Activated T-helper 1 cell treated with anti-CD3 and anti-CD28 coated beads, Interleukin-12 subunit alpha, Interleukin-12 subunit beta, Interleukin-2, Interleukin-4 antibody, amounts not matched to agents 30 ng/mL and 10 ng/mL and 1 ng/mL, durations not matched to agents 14 hours and 24 hours and 36 hours (primary cell): ENCODE measurements at regions of chr17 and their contacts with region 1.

Region 1: DNA sequence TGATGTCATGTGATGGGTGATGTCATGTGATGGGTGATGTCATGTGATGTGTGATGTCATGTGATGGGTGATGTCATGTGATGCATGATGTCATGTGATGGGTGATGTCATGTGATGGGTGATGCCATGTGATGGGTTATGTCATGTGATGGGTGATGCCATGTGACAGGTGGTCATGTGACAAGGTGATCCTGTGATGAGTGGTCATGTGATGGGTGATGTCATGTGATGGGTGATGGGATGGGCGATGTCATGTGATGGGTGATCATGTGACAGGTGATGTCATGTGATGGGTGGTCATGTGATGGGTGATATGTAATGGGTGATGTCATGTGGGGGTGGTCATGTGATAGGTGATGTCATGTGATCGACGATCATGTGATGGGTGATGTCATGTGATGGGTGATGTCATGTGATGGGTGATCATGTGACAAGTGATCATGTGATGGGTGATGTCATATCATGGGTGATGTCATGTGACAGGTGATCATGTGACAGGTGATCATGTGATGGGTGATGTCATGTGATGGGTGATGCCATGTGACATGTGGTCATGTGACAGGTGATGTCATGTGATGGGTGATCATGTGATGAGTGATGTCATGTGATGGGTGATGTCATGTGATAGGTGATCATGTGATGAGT is 17.2 kb downstream of the CD300LB start:
- DNase-seq: peak; percentile 56
- H3K4me3 Mint-ChIP-seq: peak overlapping the region; percentile 40
- H3K27ac Mint-ChIP-seq: peak overlapping the region; percentile 99
- H3K4me1 Mint-ChIP-seq: peaks cover 29% of the 10 kb centered on the region
- H3K27me3 Mint-ChIP-seq: peaks cover 15% of the 10 kb centered on the region

Region 2: GRCh38 chr17:74203439-74204240 is 310.5 kb before region 1 on chr17 and contains the start of gene RPL38:
- intact Hi-C with region 1: loop called (anchors 5 kb)
- DNase-seq: peak; percentile 91
- H3K4me3 Mint-ChIP-seq: peak within 1 kb of the TSS; percentile 99
- H3K27ac Mint-ChIP-seq: peak within 1 kb of the TSS; percentile 99
- H3K4me1 Mint-ChIP-seq: peaks cover 35% of the 10 kb centered on the region
- H3K27me3 Mint-ChIP-seq: peaks cover 23% of the 10 kb centered on the region
- total RNA-seq, gene RPL38: 1,123 and 1,161 TPM in 2 replicates

Region 3: DNA sequence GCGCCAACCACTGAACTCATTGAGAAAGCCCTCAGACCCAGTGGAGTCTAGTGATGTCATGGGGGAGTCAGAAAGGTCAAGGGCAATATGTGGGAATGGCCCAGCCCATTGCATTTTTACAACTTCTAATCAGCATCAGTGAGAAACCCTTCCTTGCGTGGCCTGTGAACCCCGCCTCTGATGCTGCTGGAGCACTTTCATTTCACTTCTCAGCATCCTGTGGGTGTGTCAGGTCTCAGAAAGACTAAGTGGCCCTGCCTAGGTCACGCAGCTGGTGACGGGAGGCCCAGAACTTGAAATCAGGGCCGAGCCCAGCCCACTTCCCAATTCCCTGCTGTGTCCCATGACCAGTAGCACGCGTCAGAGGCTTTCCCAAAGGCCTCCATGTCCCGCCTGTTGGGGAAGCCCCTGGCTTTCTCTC is 234.0 kb before region 1 on chr17:
- intact Hi-C with region 1: loop called (anchors 5 kb)
- DNase-seq: peak; percentile 61
- H3K4me3 Mint-ChIP-seq: peak overlapping the region; percentile 4
- H3K27ac Mint-ChIP-seq: peak overlapping the region; percentile 66
- H3K4me1 Mint-ChIP-seq: peaks cover 34% of the 10 kb centered on the region
- H3K27me3 Mint-ChIP-seq: no peaks in the 10 kb centered on the region

Region 4: GRCh38 chr17:74478420-74479100 is 35.5 kb before region 1 on chr17:
- intact Hi-C with region 1: loop called (anchors 5 kb)
- DNase-seq: peak; percentile 57
- H3K4me3 Mint-ChIP-seq: peak overlapping the region; percentile 67
- H3K27ac Mint-ChIP-seq: peak overlapping the region; percentile 83
- H3K4me1 Mint-ChIP-seq: peaks cover 63% of the 10 kb centered on the region
- H3K27me3 Mint-ChIP-seq: no peaks in the 10 kb centered on the region

Region 5: DNA sequence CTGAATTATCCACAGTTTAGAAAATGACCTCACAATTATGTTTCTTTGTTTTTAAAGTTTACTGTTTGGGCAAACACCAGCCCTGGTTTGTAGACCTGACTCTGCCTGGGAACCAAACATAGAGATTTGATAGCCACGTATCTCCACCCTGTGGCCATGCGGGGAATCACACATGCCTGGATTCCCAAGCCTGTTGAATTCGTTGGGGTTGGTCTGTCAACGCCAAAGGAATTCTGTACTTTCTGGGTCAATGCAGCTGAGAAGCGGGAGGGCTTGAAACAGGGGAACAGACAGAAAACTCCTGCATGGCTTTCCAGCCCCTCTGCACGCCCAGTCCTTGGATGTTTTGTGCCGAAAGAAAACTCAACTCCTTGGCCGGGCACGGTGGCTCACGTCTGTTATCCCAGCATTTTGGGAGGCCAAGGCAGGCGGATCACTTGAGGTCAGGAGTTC is 20.7 kb before region 1 on chr17:
- intact Hi-C with region 1: no loop called
- DNase-seq: peak; percentile 48
- H3K4me3 Mint-ChIP-seq: no peak overlapping the region
- H3K27ac Mint-ChIP-seq: no peak overlapping the region
- H3K4me1 Mint-ChIP-seq: peaks cover 20% of the 10 kb centered on the region
- H3K27me3 Mint-ChIP-seq: peaks cover 12% of the 10 kb centered on the region

Region 6: DNA sequence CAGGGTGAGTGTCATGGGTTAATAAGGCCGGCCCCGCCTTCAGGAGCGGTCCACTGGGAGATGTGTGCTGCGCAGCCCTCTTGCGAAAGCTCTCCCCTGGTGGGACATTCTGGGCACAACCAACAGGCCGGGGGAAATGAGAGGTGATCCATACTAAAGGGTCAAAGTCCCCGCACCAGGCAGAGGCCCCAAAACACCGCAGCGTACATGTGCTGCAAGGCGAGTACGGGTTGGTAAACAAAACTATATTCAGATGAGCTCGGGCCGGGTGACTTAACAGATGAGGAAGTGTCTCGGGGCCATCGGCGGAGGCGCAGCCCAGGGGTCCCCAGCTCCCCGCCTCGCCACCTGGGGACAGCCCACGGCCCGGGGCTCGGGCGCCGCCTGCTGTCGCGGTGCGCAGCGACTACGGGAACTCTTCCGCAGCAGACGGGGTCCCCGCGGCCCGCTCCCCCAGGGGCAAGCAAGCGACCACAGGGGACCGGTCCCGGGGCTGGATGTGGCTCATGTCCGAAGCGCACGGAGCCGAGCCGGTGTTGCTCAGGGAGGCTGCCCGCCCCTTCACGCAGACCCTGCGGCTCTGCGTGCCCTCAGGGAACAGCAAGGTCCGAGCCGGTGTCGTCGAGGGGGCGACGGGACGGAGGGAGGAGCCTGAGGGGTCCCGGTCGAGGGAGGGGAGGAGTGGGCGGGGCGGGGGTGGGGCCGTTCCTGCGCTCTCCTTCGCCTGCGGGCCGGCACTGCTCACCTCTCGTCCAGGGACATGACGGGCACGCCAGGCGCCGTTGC is 222.6 kb after region 1 on chr17 and contains the start of gene RAB37:
- intact Hi-C with region 1: loop called (anchors 10 kb)
- DNase-seq: peak; percentile 46
- H3K4me3 Mint-ChIP-seq: peak within 1 kb of the TSS; percentile 89
- H3K27ac Mint-ChIP-seq: peak within 1 kb of the TSS; percentile 84
- H3K4me1 Mint-ChIP-seq: peaks cover 50% of the 10 kb centered on the region
- H3K27me3 Mint-ChIP-seq: peaks cover 4% of the 10 kb centered on the region
- total RNA-seq, gene RAB37: 6.0 and 6.1 TPM in 2 replicates

Region 7: GRCh38 chr17:74776044-74776977 is 262.2 kb after region 1 on chr17 and contains the start of gene NAT9:
- intact Hi-C with region 1: loop called (anchors 5 kb)
- DNase-seq: peak; percentile 99
- H3K4me3 Mint-ChIP-seq: peak within 1 kb of the TSS; percentile 99
- H3K27ac Mint-ChIP-seq: peak within 1 kb of the TSS; percentile 91
- H3K4me1 Mint-ChIP-seq: peaks cover 70% of the 10 kb centered on the region
- H3K27me3 Mint-ChIP-seq: no peaks in the 10 kb centered on the region
- total RNA-seq, gene NAT9: 69.0 and 70.8 TPM in 2 replicates